CD8-positive, alpha-beta T cell (primary cell): ENCODE measurements at regions of chr9 and their contacts with region 1.

Region 1: GRCh38 chr9:93064392-93065134 is 6.1 kb downstream of the SUSD3 start:
- DNase-seq: peak; percentile 78 to 97 (median 89)
- ATAC-seq: peak; percentile 89
- H3K4me3 ChIP-seq: peak overlapping the region; percentile 24 to 91
- H3K4me3 Mint-ChIP-seq: peak overlapping the region; percentile 83
- H3K27ac ChIP-seq: peak overlapping the region; percentile 70 to 83
- H3K27ac Mint-ChIP-seq: peak overlapping the region; percentile 100
- H3K4me1 ChIP-seq: peaks cover 94% of the 10 kb centered on the region
- H3K4me1 Mint-ChIP-seq: peaks cover 88% of the 10 kb centered on the region
- H3K27me3 ChIP-seq: no peaks in the 10 kb centered on the region
- H3K27me3 Mint-ChIP-seq: no peaks in the 10 kb centered on the region
- CTCF ChIP-seq: no peak

Region 2: GRCh38 chr9:93041108-93041802 is 23.3 kb before region 1 on chr9:
- CTCF ChIA-PET with region 1: interaction called, 3 read pairs
- POLR2A ChIA-PET with region 1: interaction called, 10 read pairs
- intact Hi-C with region 1: loop called in 1 of 2 experiments (anchors 2 kb)
- DNase-seq: peak in 1 of 9 experiments; percentile 50
- ATAC-seq: no peak
- H3K4me3 ChIP-seq: no peak overlapping the region
- H3K4me3 Mint-ChIP-seq: no peak overlapping the region
- H3K27ac ChIP-seq: peak overlapping the region in 1 of 2 experiments; percentile 28
- H3K27ac Mint-ChIP-seq: peak overlapping the region; percentile 79
- H3K4me1 ChIP-seq: peaks cover 53% of the 10 kb centered on the region
- H3K4me1 Mint-ChIP-seq: peaks cover 67% of the 10 kb centered on the region
- H3K27me3 ChIP-seq: no peaks in the 10 kb centered on the region
- H3K27me3 Mint-ChIP-seq: no peaks in the 10 kb centered on the region
- CTCF ChIP-seq: no peak

Region 3: DNA sequence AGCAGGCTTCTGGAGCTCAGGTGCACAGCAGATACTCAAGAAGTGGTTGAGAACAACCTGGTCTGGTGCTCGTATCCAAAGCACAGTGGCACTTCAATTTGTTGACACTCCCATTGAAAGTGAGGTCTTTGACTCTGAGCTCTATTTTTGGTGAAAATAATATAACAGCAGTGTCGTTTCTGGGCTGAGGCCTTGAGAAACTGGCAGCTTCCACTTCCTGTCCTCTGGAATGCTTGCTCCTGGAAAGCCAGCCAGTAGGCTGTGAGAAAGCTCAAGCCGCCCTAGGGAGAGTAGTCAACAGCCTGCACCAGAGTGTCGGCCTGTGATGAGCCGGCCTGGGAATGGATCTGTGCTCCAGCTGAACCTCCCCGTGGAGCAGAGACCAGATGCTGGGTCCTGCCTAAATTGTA is 12.9 kb before region 1 on chr9:
- CTCF ChIA-PET with region 1: interaction called, 7 read pairs
- POLR2A ChIA-PET with region 1: interaction called, 32 read pairs
- intact Hi-C with region 1: no loop called
- DNase-seq: no peak
- ATAC-seq: no peak
- H3K4me3 ChIP-seq: no peak overlapping the region
- H3K4me3 Mint-ChIP-seq: no peak overlapping the region
- H3K27ac ChIP-seq: no peak overlapping the region
- H3K27ac Mint-ChIP-seq: peak overlapping the region; percentile 21
- H3K4me1 ChIP-seq: peaks cover 48% of the 10 kb centered on the region
- H3K4me1 Mint-ChIP-seq: peaks cover 53% of the 10 kb centered on the region
- H3K27me3 ChIP-seq: no peaks in the 10 kb centered on the region
- H3K27me3 Mint-ChIP-seq: no peaks in the 10 kb centered on the region
- CTCF ChIP-seq: no peak

Region 4: DNA sequence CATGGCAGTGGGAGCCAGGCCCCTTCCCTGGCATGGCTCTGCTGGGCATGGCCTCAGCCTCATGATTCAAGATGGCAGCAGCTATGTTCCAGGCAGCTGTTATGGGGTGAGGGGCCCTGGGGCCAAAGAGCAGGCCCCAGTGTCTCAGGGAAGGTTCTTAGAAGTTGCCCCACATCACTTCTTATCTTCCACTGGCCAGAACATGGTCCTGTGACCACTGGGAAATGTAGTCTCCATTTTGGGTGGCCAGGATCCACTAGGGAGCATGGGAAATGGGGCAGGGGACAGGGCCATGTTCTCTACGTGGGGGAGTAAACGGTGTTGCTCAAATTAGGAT is 12.2 kb after region 1 on chr9:
- CTCF ChIA-PET with region 1: interaction called, 6 read pairs
- POLR2A ChIA-PET with region 1: interaction called, 11 read pairs
- intact Hi-C with region 1: loop called in 1 of 2 experiments (anchors 1 kb)
- DNase-seq: no peak
- ATAC-seq: no peak
- H3K4me3 ChIP-seq: no peak overlapping the region
- H3K4me3 Mint-ChIP-seq: no peak overlapping the region
- H3K27ac ChIP-seq: no peak overlapping the region
- H3K27ac Mint-ChIP-seq: peak overlapping the region; percentile 45
- H3K4me1 ChIP-seq: peaks cover 27% of the 10 kb centered on the region
- H3K4me1 Mint-ChIP-seq: peaks cover 45% of the 10 kb centered on the region
- H3K27me3 ChIP-seq: peaks cover 0 to 3% of the 10 kb centered on the region in 2 experiments
- H3K27me3 Mint-ChIP-seq: no peaks in the 10 kb centered on the region
- CTCF ChIP-seq: no peak

Region 5: GRCh38 chr9:93422977-93423624 is 358.5 kb after region 1 on chr9:
- CTCF ChIA-PET with region 1: no interaction called
- POLR2A ChIA-PET with region 1: no interaction called
- intact Hi-C with region 1: no loop called
- DNase-seq: no peak
- ATAC-seq: no peak
- H3K4me3 ChIP-seq: no peak overlapping the region
- H3K4me3 Mint-ChIP-seq: no peak overlapping the region
- H3K27ac ChIP-seq: no peak overlapping the region
- H3K27ac Mint-ChIP-seq: no peak overlapping the region
- H3K4me1 ChIP-seq: no peaks in the 10 kb centered on the region
- H3K4me1 Mint-ChIP-seq: no peaks in the 10 kb centered on the region
- H3K27me3 ChIP-seq: no peaks in the 10 kb centered on the region
- H3K27me3 Mint-ChIP-seq: peaks cover 9% of the 10 kb centered on the region
- CTCF ChIP-seq: no peak